ENCODE measurements at regions of chr11 and their contacts with region 1.

Region 1: GRCh38 chr11:105696000-105696399 is 86.1 kb downstream of the GRIA4 start:
- DNase-seq: no peak
- H3K4me3 ChIP-seq: no peak overlapping the region
- H3K27ac ChIP-seq: no peak overlapping the region
- H3K4me1 ChIP-seq: no peaks in the 10 kb centered on the region
- H3K27me3 ChIP-seq: no peaks in the 10 kb centered on the region
- CTCF ChIP-seq: no peak
- EP300 ChIP-seq: no peak
- POLR2A ChIP-seq: no peak

Region 2: DNA sequence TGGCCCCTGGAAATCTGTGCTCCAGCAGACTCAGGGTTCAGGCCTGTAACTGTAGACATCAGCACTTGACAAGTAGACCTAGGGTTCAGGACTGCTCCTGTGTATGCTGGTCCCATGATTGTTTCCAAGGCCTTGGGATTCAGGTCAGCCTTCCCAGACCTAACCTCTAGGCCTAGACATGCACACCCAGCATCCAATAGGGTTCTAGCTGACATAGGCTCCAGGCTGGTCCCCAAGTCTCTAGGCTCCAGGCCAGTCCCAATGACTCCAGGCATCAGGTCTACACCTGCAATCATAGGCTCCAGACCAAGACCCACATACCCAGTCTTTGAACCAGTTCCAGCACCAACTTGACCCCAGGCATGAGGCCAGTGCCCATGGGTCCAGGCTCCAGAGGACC is 252.4 kb before region 1 on chr11:
- in situ Hi-C with region 1: no loop called
- intact Hi-C with region 1: no loop called
- DNase-seq: no peak
- H3K4me3 ChIP-seq: no peak overlapping the region
- H3K27ac ChIP-seq: no peak overlapping the region
- H3K4me1 ChIP-seq: no peaks in the 10 kb centered on the region
- H3K27me3 ChIP-seq: no peaks in the 10 kb centered on the region
- CTCF ChIP-seq: no peak
- EP300 ChIP-seq: no peak
- POLR2A ChIP-seq: no peak

Region 3: GRCh38 chr11:105732611-105733010 is 36.6 kb after region 1 on chr11:
- in situ Hi-C with region 1: no loop called
- intact Hi-C with region 1: loop called (anchors 1 kb)
- DNase-seq: no peak
- H3K4me3 ChIP-seq: no peak overlapping the region
- H3K27ac ChIP-seq: no peak overlapping the region
- H3K4me1 ChIP-seq: peaks cover 0 to 8% (median 2%) of the 10 kb centered on the region in 4 donors
- H3K27me3 ChIP-seq: no peaks in the 10 kb centered on the region
- CTCF ChIP-seq: no peak
- EP300 ChIP-seq: no peak
- POLR2A ChIP-seq: no peak

Measured in transverse colon (tissue), 4 donors.